ENCODE measurements at regions of chr7 and their contacts with region 1.

Region 1: GRCh38 chr7:118352854-118353453 is 128.4 kb downstream of the ANKRD7 start:
- DNase-seq: no peak
- ATAC-seq: no peak
- H3K4me3 ChIP-seq: no peak overlapping the region
- H3K27ac ChIP-seq: no peak overlapping the region
- H3K4me1 ChIP-seq: no peaks in the 10 kb centered on the region
- H3K27me3 ChIP-seq: no peaks in the 10 kb centered on the region
- CTCF ChIP-seq: peak in 4 of 12 donors; percentile 5 to 33 (median 23)
- POLR2A ChIP-seq: no peak

Region 2: DNA sequence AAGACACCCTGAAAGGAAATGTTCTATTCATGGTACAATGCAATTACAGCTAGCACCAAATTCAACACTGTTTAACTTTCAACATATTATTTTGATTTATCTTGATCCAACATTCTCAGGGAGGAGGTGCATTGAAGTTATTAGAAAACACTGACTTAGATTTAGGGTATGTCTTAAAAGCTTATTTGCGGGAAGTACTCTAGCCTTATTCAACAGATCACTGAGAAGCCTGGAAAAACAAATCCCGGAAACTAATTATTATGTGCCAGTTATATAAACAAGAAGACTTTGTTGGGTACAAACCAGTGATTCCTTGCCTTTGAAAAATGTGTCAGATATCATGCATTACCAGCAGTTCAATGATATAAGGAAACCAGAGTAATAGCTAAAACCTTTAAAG is 713.0 kb before region 1 on chr7:
- intact Hi-C with region 1: no loop called
- DNase-seq: no peak
- ATAC-seq: no peak
- H3K4me3 ChIP-seq: no peak overlapping the region
- H3K27ac ChIP-seq: no peak overlapping the region
- H3K4me1 ChIP-seq: peaks cover 0 to 3% (median 0%) of the 10 kb centered on the region in 12 donors
- H3K27me3 ChIP-seq: no peaks in the 10 kb centered on the region
- CTCF ChIP-seq: no peak
- POLR2A ChIP-seq: no peak

Region 3: GRCh38 chr7:118731854-118732253 is 378.9 kb after region 1 on chr7:
- intact Hi-C with region 1: loop called in 2 of 10 experiments (anchors 5 kb)
- DNase-seq: no peak
- ATAC-seq: no peak
- H3K4me3 ChIP-seq: no peak overlapping the region
- H3K27ac ChIP-seq: no peak overlapping the region
- H3K4me1 ChIP-seq: no peaks in the 10 kb centered on the region
- H3K27me3 ChIP-seq: no peaks in the 10 kb centered on the region
- CTCF ChIP-seq: no peak
- POLR2A ChIP-seq: no peak

Region 4: GRCh38 chr7:118745927-118746326 is 393.0 kb after region 1 on chr7:
- intact Hi-C with region 1: no loop called
- DNase-seq: no peak
- ATAC-seq: no peak
- H3K4me3 ChIP-seq: no peak overlapping the region
- H3K27ac ChIP-seq: no peak overlapping the region
- H3K4me1 ChIP-seq: no peaks in the 10 kb centered on the region
- H3K27me3 ChIP-seq: no peaks in the 10 kb centered on the region
- CTCF ChIP-seq: no peak
- POLR2A ChIP-seq: no peak

Region 5: DNA sequence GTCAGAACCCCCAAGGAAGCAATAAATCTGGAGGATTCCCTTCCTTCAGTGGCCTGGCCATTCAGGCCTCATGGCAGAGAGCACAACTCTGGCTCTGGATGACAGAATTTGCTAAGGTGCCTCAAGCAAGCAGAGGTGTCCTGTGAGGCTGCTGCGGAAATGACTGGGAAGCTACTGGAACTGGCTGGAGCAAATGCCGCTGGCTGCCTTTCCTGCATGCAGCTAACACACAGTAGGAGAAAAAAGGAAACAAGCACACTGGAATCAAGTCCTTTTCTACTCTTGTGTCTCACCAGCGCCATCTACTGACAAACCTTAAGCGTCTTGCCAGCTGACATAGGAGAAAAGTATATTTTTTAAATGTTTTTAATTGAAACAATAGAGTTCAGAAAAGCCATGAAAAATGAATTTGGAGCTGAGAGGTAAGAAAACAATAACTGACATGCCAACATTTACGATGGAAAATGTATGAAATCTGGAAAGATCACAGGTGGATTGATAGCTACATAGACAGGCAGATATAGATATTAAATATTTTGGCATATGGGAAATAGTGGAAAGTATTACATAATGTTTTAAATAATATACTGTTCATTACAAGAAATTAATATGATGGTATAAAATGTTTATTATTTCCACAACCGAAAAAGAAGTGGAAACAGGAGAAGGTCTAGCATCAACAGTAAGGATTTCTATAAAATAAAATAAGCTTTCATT is 823.1 kb after region 1 on chr7:
- intact Hi-C with region 1: loop called in 4 of 10 experiments (anchors 10 kb)
- DNase-seq: no peak
- ATAC-seq: no peak
- H3K4me3 ChIP-seq: no peak overlapping the region
- H3K27ac ChIP-seq: no peak overlapping the region
- H3K4me1 ChIP-seq: no peaks in the 10 kb centered on the region
- H3K27me3 ChIP-seq: no peaks in the 10 kb centered on the region
- CTCF ChIP-seq: peak; percentile 23 to 67 (median 46)
- POLR2A ChIP-seq: no peak